ENCODE measurements at regions of chr17 and their contacts with region 1.

Region 1: DNA sequence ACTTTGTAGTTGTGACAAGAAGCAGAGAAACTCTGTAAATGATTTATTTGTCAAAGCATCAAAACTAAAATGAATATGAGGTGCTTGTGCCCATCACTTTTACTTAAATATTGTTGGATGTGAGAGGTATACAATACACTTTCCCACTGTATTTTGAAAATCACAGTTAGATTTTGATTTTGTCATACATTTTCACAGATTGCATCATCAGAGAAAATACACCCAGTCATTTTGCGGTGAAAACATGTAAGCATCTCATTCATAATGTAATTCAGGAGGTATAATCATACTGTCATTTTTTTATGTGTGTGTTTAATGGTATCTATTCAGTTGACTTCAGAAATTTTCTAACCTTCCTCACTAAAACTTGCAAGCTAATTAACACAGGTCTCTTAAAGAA is 11.3 kb downstream of the ZNF207 start:
- DNase-seq: no peak
- H3K4me3 Mint-ChIP-seq: no peak overlapping the region
- H3K27ac Mint-ChIP-seq: no peak overlapping the region
- H3K4me1 Mint-ChIP-seq: peaks cover 32% of the 10 kb centered on the region
- H3K27me3 Mint-ChIP-seq: no peaks in the 10 kb centered on the region

Region 2: GRCh38 chr17:32152130-32152529 is 209.1 kb before region 1 on chr17:
- intact Hi-C with region 1: no loop called
- DNase-seq: no peak
- H3K4me3 Mint-ChIP-seq: no peak overlapping the region
- H3K27ac Mint-ChIP-seq: no peak overlapping the region
- H3K4me1 Mint-ChIP-seq: peaks cover 20% of the 10 kb centered on the region
- H3K27me3 Mint-ChIP-seq: no peaks in the 10 kb centered on the region

Region 3: DNA sequence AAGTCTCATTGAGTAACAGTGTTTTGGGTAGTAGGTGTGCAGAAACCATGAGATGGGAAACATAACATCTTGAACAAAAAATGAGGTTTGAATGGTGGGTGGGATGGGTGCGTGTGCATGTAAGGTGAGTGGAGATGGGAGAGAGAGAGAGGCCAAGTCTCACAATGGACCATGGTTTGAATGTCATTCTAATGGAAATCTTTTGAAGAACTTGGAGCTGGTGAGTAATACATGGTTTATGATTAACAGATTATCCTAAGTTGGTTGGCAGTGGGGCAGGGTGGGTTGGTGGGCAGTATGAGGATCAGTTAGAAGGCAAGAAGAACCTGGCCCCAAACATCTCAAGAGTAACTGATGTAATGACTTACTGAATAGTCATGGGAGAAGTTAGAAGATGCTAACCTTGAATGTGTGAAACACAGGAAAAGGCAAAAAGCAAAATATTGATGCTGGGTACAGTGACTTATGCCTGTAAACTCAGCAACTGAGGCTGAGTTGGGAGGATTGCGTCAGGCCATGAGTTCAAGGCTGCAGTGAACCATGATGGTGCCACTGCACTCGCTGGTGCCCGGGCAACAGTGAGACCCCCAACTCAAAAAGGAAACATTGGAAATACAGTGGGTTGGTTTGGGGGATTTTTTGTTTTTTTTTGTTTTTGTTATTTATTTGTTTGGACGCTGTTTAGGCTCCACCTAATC is 21.4 kb after region 1 on chr17:
- intact Hi-C with region 1: loop called (anchors 2 kb)
- DNase-seq: no peak
- H3K4me3 Mint-ChIP-seq: no peak overlapping the region
- H3K27ac Mint-ChIP-seq: no peak overlapping the region
- H3K4me1 Mint-ChIP-seq: peaks cover 10% of the 10 kb centered on the region
- H3K27me3 Mint-ChIP-seq: no peaks in the 10 kb centered on the region